Prostate gland (tissue), 2 donors: ENCODE measurements at regions of chr5 and their contacts with region 1.

Region 1: DNA sequence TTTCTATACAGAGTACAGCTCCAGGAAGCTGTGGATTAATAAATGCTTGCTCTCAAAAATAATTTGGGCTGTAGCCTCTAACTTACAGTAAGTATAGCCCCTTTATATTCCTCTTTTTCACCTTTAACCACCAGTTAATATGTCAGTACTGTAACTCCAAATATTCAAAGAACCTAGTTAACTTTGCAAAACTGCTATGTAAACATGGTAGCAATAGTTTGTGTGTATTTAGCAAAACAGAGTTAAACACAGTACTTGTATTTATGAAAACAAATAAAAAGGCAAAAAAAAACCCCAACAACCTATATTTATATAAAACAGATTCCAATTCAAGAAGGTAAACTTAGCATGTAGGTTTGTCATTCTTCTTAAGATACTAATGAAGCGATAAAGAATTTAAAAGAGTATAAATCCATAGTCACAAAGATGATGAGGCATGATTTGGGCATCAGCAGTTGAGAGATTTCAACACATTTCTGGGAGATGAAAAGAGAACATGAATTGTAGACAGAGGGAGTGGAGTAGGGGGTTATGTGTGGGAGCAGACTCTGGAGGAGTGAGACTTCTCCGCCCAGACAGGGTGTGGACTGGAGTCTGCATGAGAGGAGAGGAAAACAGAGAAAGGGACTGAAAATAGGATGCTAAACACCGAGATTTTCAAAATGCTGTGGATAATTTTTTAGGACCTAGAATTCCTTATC is 47.0 kb upstream of the F2RL1 start:
- DNase-seq: no peak
- H3K4me3 ChIP-seq: no peak overlapping the region
- H3K27ac ChIP-seq: no peak overlapping the region
- H3K4me1 ChIP-seq: no peaks in the 10 kb centered on the region
- H3K27me3 ChIP-seq: no peaks in the 10 kb centered on the region
- CTCF ChIP-seq: no peak
- POLR2A ChIP-seq: no peak

Region 2: GRCh38 chr5:76245590-76245989 is 526.3 kb before region 1 on chr5:
- intact Hi-C with region 1: no loop called
- DNase-seq: no peak
- H3K4me3 ChIP-seq: no peak overlapping the region
- H3K27ac ChIP-seq: no peak overlapping the region
- H3K4me1 ChIP-seq: no peaks in the 10 kb centered on the region
- H3K27me3 ChIP-seq: no peaks in the 10 kb centered on the region
- CTCF ChIP-seq: no peak
- POLR2A ChIP-seq: no peak

Region 3: DNA sequence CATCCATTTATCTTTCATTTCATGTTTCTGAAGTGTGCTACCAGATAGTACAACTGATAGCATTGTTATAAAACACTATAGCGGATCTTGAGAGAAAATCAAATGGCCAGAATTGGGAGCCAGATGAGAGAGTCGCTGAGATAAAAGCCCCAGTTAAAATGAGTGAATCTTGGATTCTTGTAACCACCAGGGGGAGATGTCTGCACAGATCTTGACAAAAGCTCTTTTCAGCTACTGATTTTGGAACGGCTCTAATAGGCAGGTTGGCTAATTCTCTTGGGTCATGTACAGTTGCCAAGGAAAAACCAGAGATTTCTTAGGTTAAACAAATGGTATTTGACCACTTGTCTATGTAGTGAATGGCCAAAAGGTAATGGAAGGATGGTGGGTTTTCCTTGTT is 170.4 kb before region 1 on chr5:
- intact Hi-C with region 1: loop called (anchors 5 kb)
- DNase-seq: peak; percentile 24
- H3K4me3 ChIP-seq: no peak overlapping the region
- H3K27ac ChIP-seq: no peak overlapping the region
- H3K4me1 ChIP-seq: no peaks in the 10 kb centered on the region
- H3K27me3 ChIP-seq: no peaks in the 10 kb centered on the region
- CTCF ChIP-seq: peak; percentile 23 to 82 (median 78)
- POLR2A ChIP-seq: no peak